Activated CD8-positive, alpha-beta memory T cell treated with anti-CD3 and anti-CD28 coated beads, Interleukin-2, amount 10 ng/mL, durations not matched to agents 7 days and 5 days (primary cell): ENCODE measurements at regions of chr9 and their contacts with region 1.

Region 1: DNA sequence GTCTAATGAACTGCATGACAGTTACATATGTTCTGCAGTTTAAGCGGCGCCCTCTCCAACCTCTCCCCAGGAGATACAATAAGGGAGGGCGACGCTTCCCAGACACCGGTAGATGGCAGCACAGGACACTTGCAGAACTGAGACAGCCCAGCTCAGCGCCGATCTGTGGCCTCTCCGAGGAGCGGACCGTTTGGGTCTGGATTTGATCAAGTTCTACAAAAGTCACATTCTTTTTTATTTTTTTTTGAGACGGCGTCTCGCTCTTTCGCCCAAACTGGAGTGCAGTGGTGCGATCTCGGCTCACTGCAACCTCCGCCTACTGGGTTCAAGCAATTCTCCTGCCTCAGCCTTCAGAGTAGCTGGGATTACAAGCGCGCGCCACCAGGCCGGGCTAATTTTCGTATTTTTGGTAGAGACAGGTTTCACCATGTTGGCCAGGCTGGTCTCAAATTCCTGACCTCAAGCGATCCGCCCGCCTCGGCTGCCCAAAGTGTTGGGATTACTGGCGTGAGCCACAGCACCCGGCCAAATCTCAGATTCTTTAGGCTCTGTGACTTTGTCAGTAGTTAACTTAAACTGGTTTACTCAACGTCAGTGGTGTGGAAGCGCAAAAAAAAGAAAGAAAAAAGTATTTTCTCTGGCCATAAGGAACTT is 1.4 kb upstream of the ATOSB start:
- DNase-seq: peak; percentile 93
- ATAC-seq: peak; percentile 54
- H3K4me3 Mint-ChIP-seq: peak overlapping the region; percentile 90
- H3K27ac Mint-ChIP-seq: peak overlapping the region; percentile 84
- H3K4me1 Mint-ChIP-seq: peaks cover 33% of the 10 kb centered on the region
- H3K27me3 Mint-ChIP-seq: peaks cover 7% of the 10 kb centered on the region

Region 2: DNA sequence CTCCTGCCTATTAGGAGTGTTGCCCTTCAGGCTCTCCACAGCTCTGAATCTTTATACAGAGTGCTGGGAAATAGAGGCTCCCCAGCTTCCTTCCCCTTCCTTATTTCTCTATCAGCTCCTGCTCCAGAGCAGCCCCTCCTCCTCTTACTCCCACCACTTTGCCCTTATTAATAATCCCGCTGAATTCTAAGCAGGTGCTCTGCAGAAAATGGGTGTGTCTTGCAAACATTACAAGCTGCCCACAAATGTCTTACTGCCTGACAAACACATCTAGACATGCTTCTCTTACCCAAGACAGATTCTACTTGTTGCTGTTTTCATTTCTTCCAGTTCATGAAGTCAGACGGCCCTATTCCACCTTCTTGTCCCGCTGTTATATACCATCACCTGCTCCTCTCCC is 152.6 kb before region 1 on chr9:
- CTCF ChIA-PET with region 1: no interaction called
- DNase-seq: no peak
- ATAC-seq: no peak
- H3K4me3 Mint-ChIP-seq: no peak overlapping the region
- H3K27ac Mint-ChIP-seq: no peak overlapping the region
- H3K4me1 Mint-ChIP-seq: peaks cover 7% of the 10 kb centered on the region
- H3K27me3 Mint-ChIP-seq: peaks cover 82% of the 10 kb centered on the region

Region 3: GRCh38 chr9:35096035-35096849 is 20.8 kb before region 1 on chr9 and contains the start of gene PIGO:
- CTCF ChIA-PET with region 1: interaction called, 44 read pairs
- DNase-seq: peak; percentile 92
- ATAC-seq: peak; percentile 95
- H3K4me3 Mint-ChIP-seq: peak within 1 kb of the TSS; percentile 84
- H3K27ac Mint-ChIP-seq: peak within 1 kb of the TSS; percentile 90
- H3K4me1 Mint-ChIP-seq: peaks cover 42% of the 10 kb centered on the region
- H3K27me3 Mint-ChIP-seq: no peaks in the 10 kb centered on the region
- total RNA-seq, gene PIGO: 28.5 to 31.6 TPM

Region 4: GRCh38 chr9:35102926-35103659 is 13.9 kb before region 1 on chr9 and contains the start of gene STOML2:
- CTCF ChIA-PET with region 1: interaction called, 44 read pairs
- DNase-seq: peak; percentile 96
- ATAC-seq: peak; percentile 97
- H3K4me3 Mint-ChIP-seq: peak within 1 kb of the TSS; percentile 91
- H3K27ac Mint-ChIP-seq: peak within 1 kb of the TSS; percentile 95
- H3K4me1 Mint-ChIP-seq: peaks cover 43% of the 10 kb centered on the region
- H3K27me3 Mint-ChIP-seq: no peaks in the 10 kb centered on the region
- total RNA-seq, gene STOML2: 145 to 169 TPM

Region 5: DNA sequence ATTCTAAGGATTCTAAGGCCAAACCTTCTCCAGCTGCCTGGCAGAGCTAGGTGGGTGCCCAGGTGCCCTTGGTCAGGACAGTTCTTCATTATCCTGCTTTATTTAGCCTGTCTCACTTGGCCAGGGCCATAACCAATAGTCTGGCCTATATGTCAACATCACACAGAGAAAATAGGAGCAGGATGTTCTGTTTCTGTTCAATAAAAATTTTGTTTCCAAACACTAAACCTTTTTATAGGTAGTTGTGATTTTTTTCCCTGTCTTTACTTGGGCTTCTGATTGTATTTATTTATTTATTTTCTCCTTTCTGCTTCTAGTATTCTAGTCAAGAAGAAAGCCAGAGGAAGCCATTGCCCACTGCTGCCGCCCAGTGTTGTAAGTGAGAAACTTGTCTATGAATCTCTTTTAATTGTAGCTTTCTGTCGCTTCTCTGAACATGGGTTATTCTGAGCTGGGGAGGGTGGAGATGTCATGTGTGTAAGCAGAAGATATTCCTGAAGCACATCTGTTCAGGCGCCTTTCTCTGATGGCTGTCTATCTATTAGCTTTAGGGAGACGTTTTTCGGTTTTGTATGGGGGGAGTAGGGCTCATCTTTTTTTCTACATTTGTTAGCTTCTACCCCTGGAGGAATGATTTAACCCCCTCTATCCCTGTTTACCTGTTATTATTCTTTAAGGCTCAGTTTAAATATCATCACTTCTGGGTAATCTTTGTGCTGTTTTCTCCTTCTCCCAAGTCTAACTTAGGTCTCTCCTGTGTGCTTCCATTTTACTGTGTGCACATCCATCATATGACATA is 141.8 kb after region 1 on chr9:
- CTCF ChIA-PET with region 1: interaction called, 31 read pairs
- DNase-seq: peak; percentile 65
- ATAC-seq: no peak
- H3K4me3 Mint-ChIP-seq: no peak overlapping the region
- H3K27ac Mint-ChIP-seq: no peak overlapping the region
- H3K4me1 Mint-ChIP-seq: peaks cover 4% of the 10 kb centered on the region
- H3K27me3 Mint-ChIP-seq: peaks cover 10% of the 10 kb centered on the region

Region 6: DNA sequence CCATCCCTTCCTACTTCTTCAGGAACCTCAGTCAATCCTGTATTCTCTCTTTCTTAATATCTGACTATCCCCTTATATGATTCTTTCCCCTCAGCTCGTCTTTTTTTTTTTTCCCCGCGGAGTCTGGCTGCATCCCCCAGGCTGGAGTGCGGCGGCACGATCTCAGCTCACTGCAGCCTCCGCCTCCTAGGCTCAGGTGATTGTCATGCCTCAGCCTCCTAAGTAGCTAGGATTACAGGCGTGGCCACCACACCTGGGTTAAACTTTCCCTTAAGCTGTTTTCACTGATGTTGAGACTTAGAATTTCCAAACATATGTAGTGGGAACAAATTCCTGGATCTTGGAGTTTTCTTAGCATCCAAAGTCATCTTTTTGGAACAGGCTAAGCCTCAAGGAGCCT is 359.6 kb after region 1 on chr9:
- CTCF ChIA-PET with region 1: interaction called, 29 read pairs
- DNase-seq: no peak
- ATAC-seq: no peak
- H3K4me3 Mint-ChIP-seq: no peak overlapping the region
- H3K27ac Mint-ChIP-seq: no peak overlapping the region
- H3K4me1 Mint-ChIP-seq: no peaks in the 10 kb centered on the region
- H3K27me3 Mint-ChIP-seq: peaks cover 25% of the 10 kb centered on the region

Region 7: GRCh38 chr9:35553670-35554543 is 436.9 kb after region 1 on chr9:
- CTCF ChIA-PET with region 1: interaction called, 14 read pairs
- DNase-seq: peak; percentile 59
- ATAC-seq: peak; percentile 66
- H3K4me3 Mint-ChIP-seq: no peak overlapping the region
- H3K27ac Mint-ChIP-seq: no peak overlapping the region
- H3K4me1 Mint-ChIP-seq: no peaks in the 10 kb centered on the region
- H3K27me3 Mint-ChIP-seq: peaks cover 10% of the 10 kb centered on the region